ENCODE measurements at regions of chr4 and their contacts with region 1.

Region 1: GRCh38 chr4:143482840-143483239 is 30.7 kb upstream of the SMARCA5 start:
- DNase-seq: peak in 1 of 2 donors; percentile 23
- ATAC-seq: peak in 1 of 3 donors; percentile 42
- H3K4me3 ChIP-seq: no peak overlapping the region
- H3K4me3 Mint-ChIP-seq: no peak overlapping the region
- H3K27ac ChIP-seq: no peak overlapping the region
- H3K27ac Mint-ChIP-seq: no peak overlapping the region
- H3K4me1 ChIP-seq: no peaks in the 10 kb centered on the region
- H3K4me1 Mint-ChIP-seq: no peaks in the 10 kb centered on the region
- H3K27me3 ChIP-seq: no peaks in the 10 kb centered on the region
- H3K27me3 Mint-ChIP-seq: peaks cover 4 to 6% of the 10 kb centered on the region in 2 donors
- CTCF ChIP-seq: peak; percentile 59

Region 2: DNA sequence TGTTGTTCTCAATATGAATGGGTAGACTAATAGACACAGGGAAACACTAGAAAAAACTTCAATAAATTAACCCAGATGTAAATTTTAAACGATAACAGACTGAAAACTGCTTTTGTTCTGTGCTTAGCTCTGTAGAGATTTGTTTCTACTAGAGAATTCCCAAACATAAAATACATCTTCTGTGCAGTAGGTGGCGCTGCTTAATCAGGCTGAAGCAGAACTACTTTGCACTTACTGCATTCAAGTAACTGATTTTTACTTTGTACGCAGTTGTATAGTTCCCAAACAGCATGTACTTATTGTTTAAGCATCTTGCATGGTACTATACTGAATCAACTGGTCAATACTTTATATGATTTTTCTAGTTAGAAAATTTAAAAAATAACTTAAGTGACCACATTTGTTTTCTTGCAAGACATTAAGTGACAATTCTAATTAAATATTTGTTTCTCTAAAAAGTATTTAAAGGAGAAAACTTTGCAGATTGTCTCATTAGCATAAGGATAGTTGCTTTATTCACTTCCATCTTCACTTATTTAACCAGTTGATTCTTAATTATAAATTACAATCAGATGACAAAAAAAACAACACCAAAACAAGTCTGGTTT is 1355.8 kb before region 1 on chr4:
- intact Hi-C with region 1: loop called (anchors 5 kb)
- DNase-seq: peak in 1 of 2 donors; percentile 85
- ATAC-seq: peak in 1 of 3 donors; percentile 57
- H3K4me3 ChIP-seq: no peak overlapping the region
- H3K4me3 Mint-ChIP-seq: no peak overlapping the region
- H3K27ac ChIP-seq: no peak overlapping the region
- H3K27ac Mint-ChIP-seq: no peak overlapping the region
- H3K4me1 ChIP-seq: no peaks in the 10 kb centered on the region
- H3K4me1 Mint-ChIP-seq: no peaks in the 10 kb centered on the region
- H3K27me3 ChIP-seq: no peaks in the 10 kb centered on the region
- H3K27me3 Mint-ChIP-seq: no peaks in the 10 kb centered on the region
- CTCF ChIP-seq: peak; percentile 67

Region 3: DNA sequence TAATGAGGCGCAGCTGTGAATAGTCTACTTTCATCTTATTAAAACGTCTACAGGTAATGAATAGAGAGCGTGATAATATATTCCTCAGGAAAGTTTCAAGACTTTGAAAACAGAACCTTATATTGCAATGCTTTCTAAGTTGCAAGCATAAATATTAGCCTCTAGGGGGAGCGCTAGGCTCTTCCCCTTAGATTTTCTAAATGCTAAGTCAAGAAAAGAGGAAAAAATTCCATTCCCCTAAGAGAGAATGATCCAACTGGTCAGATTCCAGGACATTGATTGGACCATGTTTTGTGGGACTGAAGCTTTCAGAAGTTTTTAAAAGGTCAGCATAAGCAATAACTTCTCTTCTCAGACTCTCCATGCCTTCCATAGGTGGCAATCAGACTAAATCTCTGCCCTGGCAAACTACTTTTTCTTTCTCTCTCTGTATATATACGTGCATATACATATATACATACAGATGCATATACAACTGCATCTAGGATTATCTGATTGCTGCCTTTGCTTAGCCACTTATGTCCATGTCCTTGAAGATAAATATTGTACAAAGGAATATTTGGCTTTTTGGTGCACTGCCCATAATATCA is 1129.6 kb before region 1 on chr4:
- intact Hi-C with region 1: loop called (anchors 10 kb)
- DNase-seq: peak in 1 of 2 donors; percentile 76
- ATAC-seq: no peak
- H3K4me3 ChIP-seq: no peak overlapping the region
- H3K4me3 Mint-ChIP-seq: no peak overlapping the region
- H3K27ac ChIP-seq: no peak overlapping the region
- H3K27ac Mint-ChIP-seq: no peak overlapping the region
- H3K4me1 ChIP-seq: peaks cover 13% of the 10 kb centered on the region
- H3K4me1 Mint-ChIP-seq: peaks cover 23 to 25% of the 10 kb centered on the region in 2 donors
- H3K27me3 ChIP-seq: no peaks in the 10 kb centered on the region
- H3K27me3 Mint-ChIP-seq: no peaks in the 10 kb centered on the region
- CTCF ChIP-seq: peak; percentile 81

Region 4: GRCh38 chr4:143381171-143382118 is 101.4 kb before region 1 on chr4:
- intact Hi-C with region 1: no loop called
- DNase-seq: no peak
- ATAC-seq: peak; percentile 73 to 89 (median 76)
- H3K4me3 ChIP-seq: no peak overlapping the region
- H3K4me3 Mint-ChIP-seq: peak overlapping the region; percentile 28
- H3K27ac ChIP-seq: peak overlapping the region; percentile 17
- H3K27ac Mint-ChIP-seq: peak overlapping the region; percentile 78
- H3K4me1 ChIP-seq: peaks cover 10% of the 10 kb centered on the region
- H3K4me1 Mint-ChIP-seq: peaks cover 20 to 24% of the 10 kb centered on the region in 2 donors
- H3K27me3 ChIP-seq: no peaks in the 10 kb centered on the region
- H3K27me3 Mint-ChIP-seq: no peaks in the 10 kb centered on the region
- CTCF ChIP-seq: no peak